ENCODE measurements at regions of chr2 and their contacts with region 1.

Region 1: DNA sequence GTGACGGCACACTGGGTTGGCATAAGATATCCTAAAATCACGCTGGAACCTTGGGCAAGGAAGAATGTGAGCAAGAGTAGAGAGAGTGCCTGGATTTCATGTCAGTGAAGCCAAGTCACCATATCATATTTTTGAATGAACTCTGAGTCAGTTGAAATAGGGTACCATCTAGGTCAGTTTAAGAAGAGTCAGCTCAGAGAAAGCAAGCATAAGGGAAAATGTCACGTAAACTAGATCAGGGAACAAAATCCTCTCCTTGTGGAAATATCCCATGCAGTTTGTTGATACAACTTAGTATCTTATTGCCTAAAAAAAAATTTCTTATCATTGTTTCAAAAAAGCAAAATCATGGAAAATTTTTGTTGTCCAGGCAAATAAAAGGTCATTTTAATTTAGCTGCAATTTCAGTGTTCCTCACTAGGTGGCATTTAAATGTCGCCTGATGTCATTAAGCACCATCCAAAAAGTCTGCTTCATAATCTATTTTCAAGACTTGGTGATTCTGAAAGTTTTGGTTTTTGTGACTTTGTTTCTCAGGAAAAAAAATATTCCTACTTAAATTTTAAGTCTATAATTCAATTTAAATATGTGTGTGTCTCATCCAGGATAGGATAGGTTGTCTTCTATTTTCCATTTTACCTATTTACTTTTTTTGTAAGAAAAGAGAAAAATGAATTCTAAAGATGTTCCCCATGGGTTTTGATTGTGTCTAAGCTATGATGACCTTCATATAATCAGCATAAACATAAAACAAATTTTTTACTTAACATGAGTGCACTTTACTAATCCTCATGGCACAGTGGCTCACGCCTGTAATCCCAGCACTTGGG is 19.6 kb downstream of the RSAD2 start:
- DNase-seq: peak in 1 of 35 experiments; percentile 72
- ATAC-seq: peak in 3 of 4 experiments; percentile 36 to 55 (median 45)
- H3K4me3 ChIP-seq: no peak overlapping the region
- H3K4me3 Mint-ChIP-seq: no peak overlapping the region
- H3K27ac ChIP-seq: no peak overlapping the region
- H3K27ac Mint-ChIP-seq: peak overlapping the region; percentile 23 to 75
- H3K4me1 ChIP-seq: no peaks in the 10 kb centered on the region
- H3K4me1 Mint-ChIP-seq: peaks cover 15 to 23% (median 16%) of the 10 kb centered on the region in 3 donors
- H3K27me3 ChIP-seq: no peaks in the 10 kb centered on the region
- H3K27me3 Mint-ChIP-seq: no peaks in the 10 kb centered on the region

Region 2: DNA sequence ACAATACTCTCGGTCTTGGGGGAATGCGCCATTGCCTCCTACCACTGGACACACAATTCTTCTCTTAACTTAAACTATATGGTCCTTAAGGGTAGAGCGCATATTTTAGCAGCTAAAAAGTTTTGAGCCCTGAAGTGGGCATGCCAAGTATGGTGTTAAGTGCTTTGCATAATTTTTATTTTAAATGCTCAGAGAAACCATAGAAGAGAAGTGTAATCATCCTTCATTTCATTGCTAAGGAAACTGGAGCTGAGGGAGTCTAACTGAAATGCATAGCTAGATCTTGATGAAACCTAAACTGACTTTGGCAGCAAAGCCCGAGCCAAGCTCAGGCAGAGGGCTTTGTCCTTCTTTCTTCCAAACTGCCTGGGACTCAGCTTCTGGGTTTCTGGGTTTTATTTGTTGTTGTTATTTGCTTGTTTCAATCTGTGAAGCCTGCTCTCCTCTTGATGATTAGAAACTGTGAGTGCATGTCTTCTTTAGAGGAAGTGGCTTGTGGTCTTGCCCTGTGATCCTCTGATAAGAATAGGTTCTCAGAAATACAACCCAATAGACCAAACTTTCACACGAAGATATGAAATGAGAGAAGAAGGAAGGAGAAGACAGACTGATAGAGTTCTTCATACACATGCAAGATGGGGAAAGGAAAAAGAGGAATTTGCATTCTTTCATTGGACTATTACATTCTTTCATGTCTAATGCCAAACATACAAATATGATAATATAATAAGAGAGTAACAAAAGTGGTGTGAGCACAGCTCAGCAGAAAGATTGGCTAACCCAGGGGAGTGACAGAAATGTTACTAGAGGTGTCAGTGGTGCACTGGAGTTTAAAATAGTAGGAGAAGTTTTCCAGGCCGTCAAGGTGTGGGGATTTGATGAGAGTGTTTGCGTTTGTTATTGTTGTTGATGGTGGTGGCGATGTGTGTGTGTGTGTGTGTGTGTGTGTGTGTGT is 12.6 kb after region 1 on chr2:
- CTCF ChIA-PET with region 1: interaction called, 5 to 16 read pairs
- POLR2A ChIA-PET with region 1: interaction called in 1 of 2 experiments, 3 read pairs
- DNase-seq: peak in 24 of 35 experiments; percentile 9 to 81 (median 40)
- ATAC-seq: peak; percentile 72 to 80 (median 77)
- H3K4me3 ChIP-seq: peak overlapping the region; percentile 6 to 11
- H3K4me3 Mint-ChIP-seq: peak overlapping the region; percentile 56 to 69 (median 65)
- H3K27ac ChIP-seq: peak overlapping the region; percentile 71
- H3K27ac Mint-ChIP-seq: peak overlapping the region; percentile 96 to 97
- H3K4me1 ChIP-seq: peaks cover 70 to 78% of the 10 kb centered on the region in 2 experiments
- H3K4me1 Mint-ChIP-seq: peaks cover 85 to 93% (median 91%) of the 10 kb centered on the region in 3 donors
- H3K27me3 ChIP-seq: no peaks in the 10 kb centered on the region
- H3K27me3 Mint-ChIP-seq: no peaks in the 10 kb centered on the region

Region 3: GRCh38 chr2:6917071-6917760 is 20.1 kb after region 1 on chr2 and contains the start of gene RNF144A:
- CTCF ChIA-PET with region 1: interaction called, 5 to 12 read pairs
- POLR2A ChIA-PET with region 1: interaction called in 1 of 2 experiments, 5 read pairs
- DNase-seq: peak; percentile 35 to 88 (median 63)
- ATAC-seq: peak; percentile 77 to 84 (median 78)
- H3K4me3 ChIP-seq: peak within 1 kb of the TSS; percentile 64 to 83
- H3K4me3 Mint-ChIP-seq: peak within 1 kb of the TSS; percentile 74 to 79 (median 77)
- H3K27ac ChIP-seq: no peak within 1 kb of the TSS
- H3K27ac Mint-ChIP-seq: peak within 1 kb of the TSS; percentile 59 to 83
- H3K4me1 ChIP-seq: peaks cover 46 to 73% of the 10 kb centered on the region in 2 experiments
- H3K4me1 Mint-ChIP-seq: peaks cover 73 to 81% (median 75%) of the 10 kb centered on the region in 3 donors
- H3K27me3 ChIP-seq: no peaks in the 10 kb centered on the region
- H3K27me3 Mint-ChIP-seq: no peaks in the 10 kb centered on the region
- total RNA-seq, gene RNF144A: 46.3 to 93.1 (median 79.9) TPM

Region 4: GRCh38 chr2:7014174-7014640 is 117.1 kb after region 1 on chr2:
- CTCF ChIA-PET with region 1: interaction called, 3 to 28 read pairs
- POLR2A ChIA-PET with region 1: no interaction called
- DNase-seq: peak in 28 of 35 experiments; percentile 15 to 58 (median 31)
- ATAC-seq: peak; percentile 63 to 73 (median 68)
- H3K4me3 ChIP-seq: no peak overlapping the region
- H3K4me3 Mint-ChIP-seq: no peak overlapping the region
- H3K27ac ChIP-seq: no peak overlapping the region
- H3K27ac Mint-ChIP-seq: peak overlapping the region; percentile 25 to 35
- H3K4me1 ChIP-seq: peaks cover 0 to 8% of the 10 kb centered on the region in 2 experiments
- H3K4me1 Mint-ChIP-seq: peaks cover 37 to 43% (median 41%) of the 10 kb centered on the region in 3 donors
- H3K27me3 ChIP-seq: no peaks in the 10 kb centered on the region
- H3K27me3 Mint-ChIP-seq: no peaks in the 10 kb centered on the region

Region 5: DNA sequence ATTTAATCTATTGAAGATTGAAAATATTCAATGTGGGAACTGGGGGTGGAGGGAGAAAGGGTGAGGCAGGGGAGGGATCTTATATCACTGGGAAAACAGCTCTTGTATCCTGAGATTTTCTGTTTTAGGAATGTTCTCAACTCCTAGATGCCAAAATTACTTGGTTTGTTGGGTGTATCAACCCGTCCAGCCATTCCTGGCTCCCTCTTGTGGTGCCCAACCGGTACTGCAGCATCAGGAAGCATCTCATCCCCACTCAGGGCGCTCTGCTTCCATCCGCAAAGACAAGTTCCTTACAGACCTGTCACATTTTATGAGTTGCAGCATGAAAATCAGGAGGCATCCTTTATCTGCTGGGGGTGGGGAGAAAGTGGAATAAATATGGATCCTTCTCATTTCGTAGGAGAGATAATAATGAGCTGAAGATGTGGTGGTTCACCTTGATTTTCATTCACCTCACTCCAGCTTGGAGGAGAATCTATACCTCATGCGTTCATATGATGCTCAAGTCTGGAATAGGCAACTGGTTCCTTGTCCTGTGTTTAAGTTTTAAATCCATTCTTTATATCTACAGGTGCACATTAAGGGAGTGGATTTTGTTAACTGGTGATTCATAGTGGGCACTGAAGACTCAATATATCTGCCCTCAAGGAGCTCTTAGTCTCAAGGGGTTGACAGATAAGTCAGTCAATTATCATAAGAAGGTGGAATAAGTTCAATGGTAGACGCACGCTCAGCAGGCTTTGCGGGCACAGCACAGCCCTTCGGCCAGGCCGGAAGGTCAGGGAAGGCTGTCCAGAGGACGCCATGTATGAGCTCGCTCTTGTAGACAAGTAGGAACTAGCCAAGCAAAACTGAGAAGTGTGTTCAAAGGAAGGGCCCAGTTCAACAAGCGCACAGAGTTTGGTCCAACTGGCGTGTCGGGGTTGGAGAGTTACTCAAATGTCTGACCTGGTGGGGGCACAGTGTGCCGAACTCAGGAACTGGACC is 147.4 kb after region 1 on chr2:
- CTCF ChIA-PET with region 1: interaction called, 15 to 20 read pairs
- POLR2A ChIA-PET with region 1: no interaction called
- DNase-seq: peak; percentile 15 to 79 (median 52)
- ATAC-seq: peak; percentile 69 to 78 (median 74)
- H3K4me3 ChIP-seq: no peak overlapping the region
- H3K4me3 Mint-ChIP-seq: no peak overlapping the region
- H3K27ac ChIP-seq: no peak overlapping the region
- H3K27ac Mint-ChIP-seq: peak overlapping the region; percentile 25 to 48
- H3K4me1 ChIP-seq: peaks cover 0 to 6% of the 10 kb centered on the region in 2 experiments
- H3K4me1 Mint-ChIP-seq: peaks cover 20 to 27% (median 25%) of the 10 kb centered on the region in 3 donors
- H3K27me3 ChIP-seq: no peaks in the 10 kb centered on the region
- H3K27me3 Mint-ChIP-seq: peaks cover 0 to 2% of the 10 kb centered on the region in 2 donors